Activated CD4-positive, alpha-beta T cell treated with anti-CD3 and anti-CD28 coated beads, Interleukin-2, amount 10 ng/mL, durations not matched to agents 24 days and 14 days (primary cell): ENCODE measurements at regions of chr20 and their contacts with region 1.

Region 1: GRCh38 chr20:1346315-1346969 is 17.5 kb upstream of the SDCBP2 start:
- DNase-seq: peak; percentile 43
- H3K4me3 Mint-ChIP-seq: peak overlapping the region; percentile 13
- H3K27ac Mint-ChIP-seq: peak overlapping the region; percentile 9
- H3K4me1 Mint-ChIP-seq: peaks cover 18% of the 10 kb centered on the region
- H3K27me3 Mint-ChIP-seq: no peaks in the 10 kb centered on the region

Region 2: DNA sequence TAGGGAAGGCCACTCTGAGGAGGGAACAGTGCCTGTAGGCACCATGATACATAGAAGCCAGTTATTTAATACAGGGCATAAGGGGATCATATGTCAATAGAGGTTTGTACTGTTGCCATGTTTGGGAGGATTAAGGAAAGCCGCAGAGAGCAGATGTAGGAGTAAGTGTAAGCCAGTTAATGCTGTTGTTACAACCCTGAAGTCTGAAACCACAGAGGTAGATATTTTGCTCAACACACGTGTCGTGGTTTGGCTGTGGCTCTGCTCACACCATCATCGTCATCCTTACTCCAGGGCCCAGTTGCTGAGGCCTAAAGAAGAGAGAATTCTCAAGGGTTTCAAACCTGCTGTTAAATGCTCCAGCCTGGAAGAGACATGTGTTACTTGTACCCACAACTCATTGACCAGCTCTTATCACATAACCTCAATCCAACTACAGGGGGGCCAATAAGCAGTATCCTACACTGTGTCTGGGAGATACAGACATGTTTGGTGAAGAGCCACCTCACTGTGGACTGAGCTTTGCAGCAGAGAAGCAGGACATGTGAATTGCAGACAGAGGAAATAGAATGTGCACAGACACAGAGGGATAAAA is 259.0 kb before region 1 on chr20:
- intact Hi-C with region 1: no loop called
- DNase-seq: no peak
- H3K4me3 Mint-ChIP-seq: no peak overlapping the region
- H3K27ac Mint-ChIP-seq: no peak overlapping the region
- H3K4me1 Mint-ChIP-seq: peaks cover 12% of the 10 kb centered on the region
- H3K27me3 Mint-ChIP-seq: peaks cover 5% of the 10 kb centered on the region

Region 3: DNA sequence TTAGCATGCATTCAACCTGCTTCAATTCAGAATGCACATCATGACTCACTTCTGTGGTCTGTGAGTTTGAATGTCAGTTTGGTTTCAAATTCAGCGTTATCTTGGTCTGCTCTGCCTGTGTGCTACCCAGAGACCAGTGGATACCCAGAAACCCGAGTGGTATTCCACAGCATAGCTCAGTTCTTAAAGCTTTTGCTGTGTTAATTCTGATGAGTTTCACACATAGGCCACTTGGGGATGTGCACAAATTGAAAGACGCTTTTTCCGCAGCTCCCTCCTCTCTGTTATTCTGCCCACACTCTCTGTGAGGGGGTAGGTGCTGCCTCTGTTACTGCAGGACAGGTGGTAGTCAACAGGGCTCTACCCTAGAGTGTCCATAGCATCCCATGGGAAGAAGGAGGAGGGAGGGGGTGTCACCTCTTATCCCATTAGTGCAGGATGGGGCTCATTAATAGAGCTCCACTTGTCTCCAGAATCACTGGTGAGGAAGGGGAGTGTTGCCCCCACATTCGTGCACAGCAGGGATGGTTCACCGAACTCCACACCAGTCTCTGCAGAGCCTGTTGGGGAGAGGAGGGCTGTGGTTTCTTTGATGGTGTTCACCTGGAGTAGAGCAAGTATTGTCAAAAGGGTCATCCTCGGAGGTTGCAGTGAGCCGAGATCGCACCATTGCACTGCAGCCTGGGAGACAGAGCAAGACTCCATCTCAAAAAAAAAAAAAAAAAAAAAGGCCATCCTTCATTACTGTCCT is 11.7 kb after region 1 on chr20:
- intact Hi-C with region 1: loop called (anchors 1 kb)
- DNase-seq: peak; percentile 86
- H3K4me3 Mint-ChIP-seq: peak overlapping the region; percentile 69
- H3K27ac Mint-ChIP-seq: peak overlapping the region; percentile 83
- H3K4me1 Mint-ChIP-seq: peaks cover 51% of the 10 kb centered on the region
- H3K27me3 Mint-ChIP-seq: no peaks in the 10 kb centered on the region